Calu3 (cell line): ENCODE measurements at regions of chr7 and their contacts with region 1.

Region 1: GRCh38 chr7:142263598-142264380 is 5.9 kb upstream of the PRSS58 start:
- DNase-seq: no peak
- H3K4me3 Mint-ChIP-seq: no peak overlapping the region
- H3K27ac Mint-ChIP-seq: no peak overlapping the region
- H3K4me1 Mint-ChIP-seq: no peaks in the 10 kb centered on the region
- H3K27me3 Mint-ChIP-seq: peaks cover 16% of the 10 kb centered on the region
- CTCF ChIP-seq: no peak

Region 2: DNA sequence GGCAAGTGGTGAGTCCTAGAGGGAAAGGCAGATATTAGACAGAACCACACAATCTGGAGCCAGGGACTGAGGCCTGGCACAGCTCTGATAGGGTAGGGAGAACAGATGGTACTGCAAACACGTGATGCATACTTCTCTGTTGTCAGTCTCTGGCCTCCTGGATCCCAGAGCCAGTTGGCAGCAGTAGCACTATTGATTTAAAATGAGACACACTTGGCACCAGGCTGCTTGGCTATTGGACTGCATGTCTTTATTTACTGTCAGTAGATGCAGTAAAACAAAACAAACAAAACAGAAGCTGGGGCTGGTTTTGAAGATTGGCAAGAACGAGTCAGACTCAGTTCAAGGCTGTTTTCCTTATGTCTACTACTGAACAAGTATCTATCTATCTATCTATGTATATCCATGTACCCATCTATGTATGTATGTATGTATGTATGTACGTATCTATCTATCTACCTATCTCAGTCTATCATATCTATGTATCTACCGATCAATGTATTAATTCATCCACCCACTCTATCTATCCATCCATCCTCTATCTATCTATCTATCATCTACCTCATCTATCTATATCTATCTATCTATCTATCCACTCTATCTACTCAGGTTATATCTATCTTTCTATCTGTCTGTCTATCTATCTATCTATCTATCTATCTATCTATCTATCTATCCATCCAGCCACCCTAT is 175.6 kb before region 1 on chr7:
- CTCF ChIA-PET with region 1: no interaction called
- intact Hi-C with region 1: no loop called
- DNase-seq: no peak
- H3K4me3 Mint-ChIP-seq: no peak overlapping the region
- H3K27ac Mint-ChIP-seq: no peak overlapping the region
- H3K4me1 Mint-ChIP-seq: peaks cover 15% of the 10 kb centered on the region
- H3K27me3 Mint-ChIP-seq: no peaks in the 10 kb centered on the region
- CTCF ChIP-seq: no peak

Region 3: GRCh38 chr7:142196066-142196840 is 67.5 kb before region 1 on chr7:
- CTCF ChIA-PET with region 1: no interaction called
- intact Hi-C with region 1: loop called (anchors 10 kb)
- DNase-seq: no peak
- H3K4me3 Mint-ChIP-seq: no peak overlapping the region
- H3K27ac Mint-ChIP-seq: peak overlapping the region; percentile 28
- H3K4me1 Mint-ChIP-seq: peaks cover 11% of the 10 kb centered on the region
- H3K27me3 Mint-ChIP-seq: no peaks in the 10 kb centered on the region
- CTCF ChIP-seq: no peak